ENCODE measurements at regions of chr3 and their contacts with region 1.

Region 1: DNA sequence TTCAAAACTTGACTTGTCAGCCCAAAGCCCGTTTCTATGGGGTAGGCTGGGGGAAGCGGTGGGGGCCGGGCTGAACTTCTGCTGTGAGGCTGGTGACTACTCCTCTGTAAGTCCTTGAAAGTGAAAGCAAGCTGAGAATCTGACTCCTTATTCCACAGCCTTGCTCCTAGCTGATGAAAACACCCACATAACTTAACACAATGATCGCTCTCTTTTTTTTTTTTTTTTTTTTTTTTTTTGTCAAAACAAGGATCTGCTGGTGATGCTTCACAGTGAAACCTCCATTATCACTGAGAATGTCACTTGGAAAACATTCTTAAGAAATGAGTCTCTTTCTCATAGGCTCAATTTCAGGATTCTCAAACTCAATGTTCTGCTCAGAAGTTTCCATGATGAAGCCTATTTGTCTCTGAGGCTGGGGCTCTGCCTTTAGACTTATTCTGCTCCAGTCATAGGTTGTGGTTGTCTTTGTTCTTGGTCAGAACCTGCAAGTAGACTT is 31.4 kb upstream of the TKT start:
- DNase-seq: no peak
- H3K4me3 ChIP-seq: peak overlapping the region in 3 of 4 experiments; percentile 12 to 42 (median 24); a peak in 5 of 8 replicates
- H3K27ac ChIP-seq: peak overlapping the region; percentile 38; the same call in 1 of the 2 replicates
- H3K4me1 ChIP-seq: peaks cover 9 to 21% (median 13%) of the 10 kb centered on the region in 4 experiments; a peak in 6 of 7 replicates
- H3K27me3 ChIP-seq: no peaks in the 10 kb centered on the region
- CTCF ChIP-seq: no peak
- EP300 ChIP-seq: no peak
- POLR2A ChIP-seq: no peak
- RAD21 ChIP-seq: no peak

Region 2: DNA sequence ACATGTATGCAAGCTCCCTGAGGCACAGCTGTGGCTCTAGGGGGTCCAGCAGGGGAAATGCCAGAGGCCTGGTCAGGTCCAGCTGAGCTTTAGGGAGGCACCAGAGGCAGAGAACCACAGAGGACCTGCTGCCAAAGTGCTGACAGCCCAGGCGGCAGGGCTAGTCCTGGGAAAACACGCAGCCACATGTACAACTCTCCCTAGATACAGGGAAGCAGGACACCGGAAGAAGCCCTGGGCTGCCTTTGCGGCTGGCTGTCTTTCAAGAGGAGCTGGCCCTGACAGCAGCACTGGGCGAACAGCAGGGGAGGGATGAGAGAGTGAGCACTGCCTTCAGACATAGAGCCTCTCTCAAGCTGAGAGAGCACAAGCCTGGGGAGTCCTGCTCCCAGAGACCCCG is 197.7 kb before region 1 on chr3:
- CTCF ChIA-PET with region 1: no interaction called
- POLR2A ChIA-PET with region 1: no interaction called
- DNase-seq: no peak
- H3K4me3 ChIP-seq: no peak overlapping the region
- H3K27ac ChIP-seq: no peak overlapping the region
- H3K4me1 ChIP-seq: no peaks in the 10 kb centered on the region
- H3K27me3 ChIP-seq: no peaks in the 10 kb centered on the region
- CTCF ChIP-seq: no peak
- EP300 ChIP-seq: no peak
- POLR2A ChIP-seq: no peak
- RAD21 ChIP-seq: no peak

Region 3: GRCh38 chr3:53269888-53270880 is 17.0 kb before region 1 on chr3:
- CTCF ChIA-PET with region 1: interaction called, 10 read pairs
- POLR2A ChIA-PET with region 1: interaction called, 17 read pairs
- DNase-seq: peak; percentile 74 to 85
- H3K4me3 ChIP-seq: no peak overlapping the region
- H3K27ac ChIP-seq: peak overlapping the region; percentile 65; the same call in 1 of the 2 replicates
- H3K4me1 ChIP-seq: peaks cover 0 to 9% (median 5%) of the 10 kb centered on the region in 4 experiments; a peak in 5 of 7 replicates
- H3K27me3 ChIP-seq: no peaks in the 10 kb centered on the region; a peak in 2 of 7 replicates
- CTCF ChIP-seq: no peak
- EP300 ChIP-seq: peak in 1 of 2 experiments; percentile 63; a peak in 1 of 3 replicates
- POLR2A ChIP-seq: peak in 1 of 2 experiments; percentile 38; a peak in 1 of 3 replicates
- RAD21 ChIP-seq: no peak; a peak in 1 of 4 replicates

Region 4: GRCh38 chr3:53300826-53301225 is 13.6 kb after region 1 on chr3:
- CTCF ChIA-PET with region 1: interaction called, 27 read pairs
- POLR2A ChIA-PET with region 1: no interaction called
- DNase-seq: no peak
- H3K4me3 ChIP-seq: no peak overlapping the region
- H3K27ac ChIP-seq: no peak overlapping the region
- H3K4me1 ChIP-seq: no peaks in the 10 kb centered on the region
- H3K27me3 ChIP-seq: no peaks in the 10 kb centered on the region
- CTCF ChIP-seq: no peak
- EP300 ChIP-seq: no peak
- POLR2A ChIP-seq: no peak
- RAD21 ChIP-seq: no peak

Region 5: DNA sequence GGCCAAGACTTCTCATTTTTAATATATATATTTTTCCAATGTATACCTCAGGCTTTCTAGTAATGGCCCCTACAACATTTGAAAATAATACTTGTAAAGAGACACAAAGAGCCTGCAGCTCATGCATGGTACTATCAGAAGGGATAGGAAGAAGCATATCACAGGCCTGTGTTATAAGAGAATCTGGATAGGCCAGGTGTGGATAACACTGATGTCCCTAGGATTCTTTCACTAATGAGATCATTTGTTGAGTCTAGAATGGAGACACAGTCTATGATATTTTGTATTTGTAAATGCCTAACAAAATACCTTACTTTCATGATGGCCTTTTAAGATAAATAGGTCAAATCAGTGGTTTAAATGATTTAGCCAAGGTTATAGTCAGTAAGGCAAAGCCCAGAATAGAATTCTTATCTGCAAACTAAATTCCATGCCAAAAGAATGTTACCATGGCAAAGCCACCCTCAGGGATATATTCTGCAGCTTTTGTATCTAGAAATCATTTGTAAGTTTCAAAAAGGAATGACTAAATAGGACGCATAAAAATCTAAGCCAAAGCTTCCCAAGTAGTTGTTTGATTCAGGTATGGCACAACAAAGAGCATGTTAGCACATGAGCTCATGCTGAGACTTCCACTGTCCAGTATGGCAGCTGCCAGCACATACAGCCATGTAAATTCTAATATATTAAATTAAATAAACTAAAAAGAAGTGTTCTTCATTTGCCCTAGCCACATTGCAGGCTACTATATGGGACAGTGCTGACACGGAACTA is 50.2 kb after region 1 on chr3:
- CTCF ChIA-PET with region 1: no interaction called
- POLR2A ChIA-PET with region 1: no interaction called
- DNase-seq: no peak
- H3K4me3 ChIP-seq: no peak overlapping the region
- H3K27ac ChIP-seq: no peak overlapping the region
- H3K4me1 ChIP-seq: no peaks in the 10 kb centered on the region
- H3K27me3 ChIP-seq: no peaks in the 10 kb centered on the region
- CTCF ChIP-seq: no peak
- EP300 ChIP-seq: no peak
- POLR2A ChIP-seq: no peak
- RAD21 ChIP-seq: no peak

Measured in H1 (cell line).